GM12878 (cell line): ENCODE measurements at regions of chr22 and their contacts with region 1.

Region 1: GRCh38 chr22:22342697-22343580 is 98.4 kb downstream of the VPREB1 start:
- DNase-seq: no peak
- ATAC-seq: peak; percentile 91
- H3K4me3 ChIP-seq: no peak overlapping the region
- H3K27ac ChIP-seq: no peak overlapping the region
- H3K4me1 ChIP-seq: peaks cover 9% of the 10 kb centered on the region; the same call in 1 of the 2 replicates
- H3K27me3 ChIP-seq: no peaks in the 10 kb centered on the region
- CTCF ChIP-seq: peak; percentile 59 to 82 (median 77)
- EP300 ChIP-seq: no peak
- POLR2A ChIP-seq: no peak
- RAD21 ChIP-seq: peak; percentile 44

Region 2: DNA sequence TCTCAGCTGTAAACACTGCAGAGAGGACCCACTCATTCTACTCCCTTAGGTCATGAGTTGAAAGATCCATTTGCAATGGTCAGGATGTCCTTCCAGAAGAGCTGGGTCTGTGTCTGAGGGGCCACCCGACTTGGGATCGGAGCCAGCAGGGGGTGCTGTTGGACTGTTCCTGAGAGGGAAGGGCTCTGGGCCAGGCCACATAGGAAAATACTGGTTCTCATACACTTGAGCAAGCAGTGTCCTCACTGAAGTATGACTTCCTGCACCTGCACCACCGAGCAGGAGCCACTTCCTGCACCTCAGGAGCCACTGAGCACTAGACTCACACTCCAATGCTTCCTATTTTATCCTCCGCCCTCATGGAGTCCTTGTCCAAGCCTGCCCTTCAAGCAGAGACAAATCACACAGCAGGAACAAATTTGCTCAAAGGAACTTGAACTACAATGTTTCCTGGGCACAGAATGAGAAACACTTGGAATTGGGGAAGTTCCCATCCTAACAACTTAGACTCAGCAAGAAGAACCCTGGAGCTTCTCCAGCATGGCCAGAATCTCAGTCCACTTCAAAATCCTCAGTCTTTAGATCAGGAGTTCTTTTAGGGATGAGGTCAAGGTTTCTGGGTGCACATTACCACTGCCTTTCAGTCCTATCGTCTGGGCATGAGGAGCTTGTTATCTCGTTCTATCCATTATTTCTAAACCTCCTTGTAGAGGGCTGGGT is 134.9 kb before region 1 on chr22:
- CTCF ChIA-PET with region 1: interaction called, 7 read pairs
- POLR2A ChIA-PET with region 1: no interaction called
- RAD21 ChIA-PET with region 1: no interaction called
- SMC1A ChIA-PET with region 1: no interaction called
- in situ Hi-C with region 1: no loop called
- intact Hi-C with region 1: loop called (anchors 10 kb)
- DNase-seq: peak; percentile 62
- ATAC-seq: peak; percentile 94
- H3K4me3 ChIP-seq: no peak overlapping the region
- H3K27ac ChIP-seq: peak overlapping the region; percentile 45
- H3K4me1 ChIP-seq: peaks cover 3% of the 10 kb centered on the region
- H3K27me3 ChIP-seq: no peaks in the 10 kb centered on the region
- CTCF ChIP-seq: peak; percentile 66 to 78 (median 69); a peak in 5 of 6 replicates
- EP300 ChIP-seq: no peak
- POLR2A ChIP-seq: 0 out of 2 replicates have a peak, but pooled peaks have one; percentile 35
- RAD21 ChIP-seq: peak; percentile 81

Region 3: DNA sequence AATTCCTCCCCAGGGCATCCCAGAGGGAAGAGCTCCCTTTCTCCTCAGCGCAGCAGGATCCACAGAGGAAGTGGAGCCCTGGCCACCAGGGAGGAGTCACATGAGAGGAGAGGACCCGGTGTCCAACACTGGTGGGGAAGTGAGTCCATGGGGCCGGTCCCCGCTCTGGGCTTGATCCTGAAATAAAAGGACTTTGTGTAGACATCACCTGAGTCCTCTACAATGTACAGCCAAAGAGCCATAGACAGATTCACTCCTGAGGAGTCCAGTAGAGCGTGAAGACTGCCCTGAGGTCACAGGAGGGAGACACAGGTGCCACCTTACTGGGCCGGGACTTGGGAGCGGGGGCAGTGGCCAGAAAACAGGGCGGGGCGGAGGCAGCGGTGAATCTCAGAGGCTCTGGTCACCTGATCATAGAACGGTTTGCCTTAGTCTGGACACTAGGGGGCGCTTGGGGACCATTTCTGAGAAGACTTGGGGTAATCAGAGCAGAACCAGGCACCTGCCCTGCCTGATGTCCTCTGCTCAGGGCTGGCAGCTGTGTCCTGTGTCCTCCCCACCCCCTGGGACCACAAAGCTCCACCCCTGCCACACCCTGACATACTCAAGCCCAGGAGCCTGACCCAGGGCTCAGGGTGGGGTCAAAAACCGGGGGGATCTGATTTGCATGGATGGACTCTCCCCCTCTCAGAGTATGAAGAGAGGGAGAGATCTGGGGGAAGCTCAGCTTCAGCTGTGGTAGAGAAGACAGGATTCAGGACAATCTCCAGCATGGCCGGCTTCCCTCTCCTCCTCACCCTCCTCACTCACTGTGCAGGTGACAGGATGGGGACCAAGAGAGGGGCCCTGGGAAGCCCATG is 14.3 kb after region 1 on chr22:
- CTCF ChIA-PET with region 1: interaction called, 13 read pairs
- POLR2A ChIA-PET with region 1: no interaction called
- RAD21 ChIA-PET with region 1: no interaction called
- SMC1A ChIA-PET with region 1: no interaction called
- in situ Hi-C with region 1: no loop called
- intact Hi-C with region 1: no loop called
- DNase-seq: peak; percentile 34
- ATAC-seq: peak; percentile 100
- H3K4me3 ChIP-seq: no peak overlapping the region
- H3K27ac ChIP-seq: no peak overlapping the region
- H3K4me1 ChIP-seq: no peaks in the 10 kb centered on the region
- H3K27me3 ChIP-seq: no peaks in the 10 kb centered on the region
- CTCF ChIP-seq: peak; percentile 59 to 65 (median 62); a peak in 5 of 6 replicates
- EP300 ChIP-seq: no peak
- POLR2A ChIP-seq: no peak
- RAD21 ChIP-seq: peak; percentile 61

Region 4: DNA sequence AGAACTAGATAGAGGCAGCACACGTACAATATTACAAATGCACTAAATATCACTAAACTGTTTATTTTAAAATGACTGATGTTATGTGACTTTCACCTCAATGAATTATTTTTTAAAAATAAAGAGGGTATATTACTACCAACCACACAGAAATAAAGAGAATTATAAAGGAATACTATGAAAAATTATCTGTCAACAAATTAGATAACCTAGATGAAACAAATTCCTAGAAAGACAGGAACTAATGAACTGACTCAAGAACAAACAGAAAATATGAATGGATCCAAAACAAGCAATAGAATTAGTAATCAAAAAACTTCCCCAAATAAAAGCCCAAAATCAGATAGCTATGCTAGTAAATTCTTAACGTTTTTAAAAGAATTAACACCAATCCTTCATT is 155.3 kb after region 1 on chr22:
- CTCF ChIA-PET with region 1: no interaction called
- POLR2A ChIA-PET with region 1: no interaction called
- RAD21 ChIA-PET with region 1: no interaction called
- SMC1A ChIA-PET with region 1: no interaction called
- in situ Hi-C with region 1: no loop called
- intact Hi-C with region 1: no loop called
- DNase-seq: no peak
- ATAC-seq: no peak
- H3K4me3 ChIP-seq: no peak overlapping the region
- H3K27ac ChIP-seq: no peak overlapping the region
- H3K4me1 ChIP-seq: no peaks in the 10 kb centered on the region
- H3K27me3 ChIP-seq: no peaks in the 10 kb centered on the region
- CTCF ChIP-seq: no peak
- EP300 ChIP-seq: no peak
- POLR2A ChIP-seq: no peak
- RAD21 ChIP-seq: no peak

Region 5: DNA sequence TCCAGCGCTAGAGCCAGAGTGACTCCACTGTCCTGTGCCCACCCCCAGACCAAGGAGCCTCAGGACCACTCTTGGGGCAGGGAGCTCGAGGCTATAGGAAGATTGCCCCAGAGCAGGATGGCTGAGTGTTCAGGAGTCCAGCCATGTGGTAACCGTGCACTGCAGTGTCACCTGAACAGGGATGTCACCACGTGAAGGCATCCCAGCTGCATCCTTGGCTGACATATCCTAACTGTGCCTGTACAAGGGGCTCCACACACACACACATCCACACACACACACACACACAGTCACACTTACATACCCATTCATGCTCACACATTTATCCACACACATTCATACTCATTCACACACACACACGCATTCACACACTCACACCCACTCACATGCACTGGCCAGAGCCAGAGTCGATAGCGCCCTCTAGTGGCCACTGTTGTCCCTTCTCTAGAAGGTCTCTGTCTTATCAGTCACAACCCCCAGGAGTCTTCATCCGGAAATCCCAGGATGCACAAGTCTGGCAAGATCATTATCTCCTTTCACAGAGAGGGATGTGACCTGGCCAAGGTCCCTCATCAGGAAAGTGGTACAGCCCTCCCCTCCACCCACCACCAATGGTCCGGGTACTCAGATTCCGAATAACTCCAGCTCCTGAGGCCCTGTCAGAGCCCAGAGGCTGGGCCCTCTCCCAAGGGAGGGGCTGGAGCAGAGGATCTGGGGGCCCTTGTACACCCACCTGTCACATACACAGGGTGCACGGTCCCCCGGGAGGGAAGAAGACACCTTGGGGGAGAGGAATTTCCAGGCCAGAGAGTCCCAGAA is 599.8 kb after region 1 on chr22:
- CTCF ChIA-PET with region 1: no interaction called
- POLR2A ChIA-PET with region 1: no interaction called
- RAD21 ChIA-PET with region 1: no interaction called
- SMC1A ChIA-PET with region 1: no interaction called
- in situ Hi-C with region 1: loop called (anchors 5 kb)
- intact Hi-C with region 1: no loop called
- DNase-seq: peak; percentile 78
- ATAC-seq: peak; percentile 89
- H3K4me3 ChIP-seq: no peak overlapping the region
- H3K27ac ChIP-seq: peak overlapping the region; percentile 92
- H3K4me1 ChIP-seq: peaks cover 90% of the 10 kb centered on the region
- H3K27me3 ChIP-seq: no peaks in the 10 kb centered on the region
- CTCF ChIP-seq: peak; percentile 84 to 96 (median 87)
- EP300 ChIP-seq: 0 out of 4 replicates have a peak, but pooled peaks of 1 of the 2 experiments have one; percentile 61
- POLR2A ChIP-seq: no peak; the same call in 1 of the 2 replicates
- RAD21 ChIP-seq: peak; percentile 94